ENCODE measurements at regions of chr14 and their contacts with region 1.

Region 1: GRCh38 chr14:78566026-78566858 is 396.1 kb downstream of the NRXN3 start:
- DNase-seq: peak; percentile 72 to 75
- H3K4me3 ChIP-seq: peak overlapping the region; percentile 23 to 44
- H3K27ac ChIP-seq: no peak overlapping the region
- H3K4me1 ChIP-seq: peaks cover 0 to 5% (median 2%) of the 10 kb centered on the region in 4 donors
- H3K27me3 ChIP-seq: no peaks in the 10 kb centered on the region
- CTCF ChIP-seq: peak; percentile 60

Region 2: GRCh38 chr14:77862154-77862786 is 704.0 kb before region 1 on chr14:
- intact Hi-C with region 1: loop called (anchors 5 kb)
- DNase-seq: peak; percentile 74 to 77
- H3K4me3 ChIP-seq: no peak overlapping the region
- H3K27ac ChIP-seq: no peak overlapping the region
- H3K4me1 ChIP-seq: no peaks in the 10 kb centered on the region
- H3K27me3 ChIP-seq: no peaks in the 10 kb centered on the region
- CTCF ChIP-seq: peak; percentile 73 to 87

Region 3: DNA sequence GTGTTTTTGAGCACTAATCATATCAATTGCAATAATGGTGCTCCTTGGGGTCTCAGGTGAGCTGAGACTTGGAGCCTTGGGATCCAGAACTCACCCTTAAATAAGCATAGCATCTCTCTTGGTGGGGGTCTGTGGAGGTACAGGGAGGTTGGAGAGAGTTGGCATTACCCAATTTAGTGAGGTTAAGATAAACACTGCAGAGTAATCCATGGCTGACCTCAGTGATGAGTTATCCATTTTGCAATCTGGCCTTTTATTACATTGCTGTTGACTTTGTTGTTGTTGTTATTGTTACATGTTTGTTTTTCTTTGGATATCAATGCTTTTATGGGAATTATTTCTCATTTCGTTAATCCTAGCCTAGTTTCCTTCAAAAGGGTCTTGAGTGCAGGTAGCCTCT is 22.8 kb before region 1 on chr14:
- intact Hi-C with region 1: no loop called
- DNase-seq: no peak
- H3K4me3 ChIP-seq: no peak overlapping the region
- H3K27ac ChIP-seq: no peak overlapping the region
- H3K4me1 ChIP-seq: no peaks in the 10 kb centered on the region
- H3K27me3 ChIP-seq: no peaks in the 10 kb centered on the region
- CTCF ChIP-seq: no peak

Region 4: DNA sequence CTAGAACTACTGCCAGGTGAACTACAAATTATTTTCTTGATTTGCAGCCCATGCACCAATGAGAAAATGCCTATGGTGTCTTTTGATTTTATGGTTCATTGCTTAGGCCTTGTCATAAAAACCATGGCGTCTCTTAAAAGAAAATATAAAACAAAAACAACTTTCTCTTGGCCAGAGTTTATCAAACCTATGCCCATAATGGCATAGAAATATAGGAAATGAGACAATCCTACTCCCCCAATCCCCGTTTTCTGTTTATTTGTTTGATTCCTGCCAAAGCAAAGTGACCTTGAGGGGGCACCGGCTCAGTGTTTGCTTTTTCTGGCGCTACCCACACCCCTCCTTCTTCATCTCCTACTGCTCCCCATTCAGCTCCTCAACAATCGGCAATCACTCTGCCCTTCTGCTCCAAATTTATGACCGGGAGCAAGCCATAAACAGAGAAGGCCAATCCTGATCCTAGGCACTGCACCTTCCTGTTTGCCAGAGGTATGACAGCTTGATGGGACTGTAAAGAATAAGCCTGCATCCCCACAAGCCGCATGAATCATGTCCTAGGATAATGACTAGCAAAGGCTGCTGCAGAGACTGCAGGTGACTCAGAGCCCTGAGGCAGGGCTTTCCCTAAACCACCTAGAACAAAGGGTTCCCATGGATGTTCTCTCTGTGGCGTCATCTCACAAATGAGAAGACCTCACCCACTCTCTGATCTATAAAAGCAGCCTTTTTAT is 478.8 kb after region 1 on chr14:
- intact Hi-C with region 1: loop called (anchors 5 kb)
- DNase-seq: no peak
- H3K4me3 ChIP-seq: no peak overlapping the region
- H3K27ac ChIP-seq: no peak overlapping the region
- H3K4me1 ChIP-seq: no peaks in the 10 kb centered on the region
- H3K27me3 ChIP-seq: no peaks in the 10 kb centered on the region
- CTCF ChIP-seq: no peak

Measured in tibial artery (tissue), 4 donors.